ENCODE measurements at regions of chr16 and their contacts with region 1.

Region 1: DNA sequence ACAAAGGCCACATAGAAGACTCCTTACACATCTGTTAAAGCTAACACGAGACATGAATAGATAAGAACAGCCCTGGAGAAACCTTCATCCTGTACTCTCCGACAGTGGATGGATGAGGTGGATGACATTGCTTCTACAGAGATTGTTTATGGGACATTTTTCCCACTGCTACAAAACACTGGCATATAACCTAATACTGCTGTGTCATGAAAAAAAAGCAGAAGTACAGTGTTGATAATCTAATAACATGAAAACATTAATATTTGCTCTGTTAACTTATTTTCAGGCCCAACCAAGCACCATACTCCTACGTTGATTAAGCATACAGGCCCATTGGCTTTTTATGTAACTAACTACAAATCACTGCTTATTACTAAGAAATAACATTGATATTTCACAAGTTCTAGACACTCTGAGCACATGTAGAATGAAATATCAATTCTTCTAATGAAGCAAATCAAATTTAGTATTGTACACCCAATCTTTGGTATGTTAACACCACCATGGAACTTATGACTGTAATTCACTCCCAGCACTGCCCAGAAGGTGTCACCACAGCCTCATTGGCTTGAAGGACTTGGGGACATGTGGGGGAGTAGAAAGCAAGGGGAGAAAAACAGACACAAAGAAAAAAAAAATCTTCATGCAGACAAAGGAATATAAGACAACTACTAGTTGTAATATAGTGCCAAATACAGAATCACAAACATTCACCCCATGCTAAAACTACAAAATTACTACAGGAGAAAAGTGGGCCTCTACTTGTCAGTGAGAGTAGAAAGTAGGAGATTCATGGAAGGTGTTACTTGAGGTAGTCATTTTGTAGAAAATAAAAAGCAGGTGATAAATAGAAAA is 330.0 kb upstream of the PMFBP1 start:
- DNase-seq: peak; percentile 29
- ATAC-seq: peak; percentile 58
- H3K4me3 Mint-ChIP-seq: no peak overlapping the region
- H3K27ac Mint-ChIP-seq: no peak overlapping the region
- H3K4me1 Mint-ChIP-seq: peaks cover 3% of the 10 kb centered on the region
- H3K27me3 Mint-ChIP-seq: no peaks in the 10 kb centered on the region
- CTCF ChIP-seq: peak; percentile 26

Region 2: DNA sequence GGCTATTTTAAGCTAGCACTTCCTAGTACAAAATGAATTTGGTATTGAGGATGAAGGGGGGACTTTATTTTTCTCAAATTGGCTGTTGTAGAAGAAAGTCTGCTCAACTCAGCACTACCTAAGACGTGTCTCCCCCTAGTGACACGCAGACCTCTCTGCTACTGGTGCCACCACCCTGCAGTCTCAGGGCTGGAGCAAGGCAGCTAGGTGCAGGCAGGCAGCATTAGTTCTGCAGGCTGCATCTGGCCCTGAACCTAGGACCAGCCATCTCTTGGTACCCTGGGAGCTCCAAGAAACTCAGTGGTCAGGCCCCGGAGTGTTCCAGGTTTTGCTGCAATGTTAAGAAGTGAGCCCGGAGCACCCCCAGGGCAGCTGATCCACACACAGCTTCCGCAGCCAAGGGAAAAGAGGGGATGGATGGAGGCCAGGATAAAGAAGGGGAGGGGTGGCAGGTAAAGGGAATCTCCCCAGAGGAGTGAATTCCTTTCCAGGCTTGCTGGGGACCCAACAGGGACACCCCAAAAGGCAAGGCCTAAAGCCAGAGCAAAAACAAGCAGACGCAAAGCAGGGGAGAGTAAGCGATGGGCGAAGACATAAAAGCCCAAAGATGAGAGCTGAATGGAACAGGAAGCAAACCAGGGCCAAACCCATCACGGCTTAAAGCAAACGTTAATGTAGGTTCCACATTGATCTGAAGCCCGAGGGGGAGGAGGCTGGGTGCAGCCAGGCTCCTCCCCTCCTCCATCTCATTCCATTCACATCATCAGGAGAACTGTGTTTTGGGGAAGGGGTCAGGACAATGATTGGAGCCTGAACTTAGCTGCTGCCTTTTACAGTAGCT is 345.4 kb after region 1 on chr16:
- CTCF ChIA-PET with region 1: interaction called, 7 read pairs
- POLR2A ChIA-PET with region 1: no interaction called
- intact Hi-C with region 1: loop called (anchors 2 kb)
- DNase-seq: no peak
- ATAC-seq: peak; percentile 34
- H3K4me3 Mint-ChIP-seq: no peak overlapping the region
- H3K27ac Mint-ChIP-seq: no peak overlapping the region
- H3K4me1 Mint-ChIP-seq: peaks cover 18% of the 10 kb centered on the region
- H3K27me3 Mint-ChIP-seq: peaks cover 20% of the 10 kb centered on the region
- CTCF ChIP-seq: no peak

Region 3: DNA sequence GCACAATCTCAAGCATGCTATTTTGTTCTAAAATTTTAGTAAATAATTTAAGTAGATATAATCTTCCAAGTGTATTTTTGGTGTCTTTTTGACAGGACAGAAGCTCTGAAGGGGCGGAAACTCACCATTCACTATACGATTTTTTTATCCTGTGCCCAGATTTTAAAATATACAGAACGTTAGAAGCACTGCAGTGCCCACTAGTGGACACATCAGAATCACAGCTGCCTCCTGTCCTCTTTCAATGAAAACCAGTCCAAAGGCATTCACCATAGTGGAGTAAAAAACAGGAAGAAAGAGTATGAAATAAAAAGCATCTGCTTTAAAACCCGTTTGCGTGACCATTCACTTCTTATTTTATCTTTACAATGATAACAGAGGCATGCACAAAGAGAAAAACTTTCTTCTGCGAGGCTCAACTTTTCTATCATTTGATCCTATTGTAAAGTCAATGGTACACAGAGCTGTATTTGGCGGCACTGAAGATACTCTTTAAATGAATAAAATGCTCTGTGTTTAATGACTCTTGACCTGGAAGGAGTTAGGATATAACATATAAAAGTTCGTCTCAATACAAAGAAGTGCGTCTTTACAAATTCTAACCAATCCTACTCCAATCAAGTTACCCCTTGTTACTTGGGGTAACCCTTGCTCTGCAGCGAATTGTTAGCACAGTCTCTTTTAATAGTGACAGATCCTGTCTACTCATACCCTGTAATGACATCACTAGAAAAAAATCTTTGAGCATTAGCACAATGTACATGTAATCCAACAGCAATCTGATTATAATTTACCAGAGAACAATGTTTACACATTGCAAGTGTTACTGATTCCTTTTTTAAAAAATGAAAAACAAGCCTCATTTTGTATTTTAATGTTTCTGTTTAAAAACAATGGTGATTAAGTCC is 1454.9 kb after region 1 on chr16:
- CTCF ChIA-PET with region 1: interaction called, 8 read pairs
- POLR2A ChIA-PET with region 1: no interaction called
- intact Hi-C with region 1: loop called (anchors 1 kb)
- DNase-seq: no peak
- ATAC-seq: no peak
- H3K4me3 Mint-ChIP-seq: no peak overlapping the region
- H3K27ac Mint-ChIP-seq: no peak overlapping the region
- H3K4me1 Mint-ChIP-seq: no peaks in the 10 kb centered on the region
- H3K27me3 Mint-ChIP-seq: no peaks in the 10 kb centered on the region
- CTCF ChIP-seq: peak; percentile 44

Region 4: GRCh38 chr16:74034862-74035261 is 1532.9 kb after region 1 on chr16:
- CTCF ChIA-PET with region 1: no interaction called
- POLR2A ChIA-PET with region 1: no interaction called
- intact Hi-C with region 1: loop called (anchors 10 kb)
- DNase-seq: no peak
- ATAC-seq: no peak
- H3K4me3 Mint-ChIP-seq: no peak overlapping the region
- H3K27ac Mint-ChIP-seq: no peak overlapping the region
- H3K4me1 Mint-ChIP-seq: no peaks in the 10 kb centered on the region
- H3K27me3 Mint-ChIP-seq: no peaks in the 10 kb centered on the region
- CTCF ChIP-seq: no peak

Measured in activated B cell treated with CpG ODN at 0.5 μM for 24 hours (primary cell).